ENCODE measurements at regions of chr17 and their contacts with region 1.

Region 1: DNA sequence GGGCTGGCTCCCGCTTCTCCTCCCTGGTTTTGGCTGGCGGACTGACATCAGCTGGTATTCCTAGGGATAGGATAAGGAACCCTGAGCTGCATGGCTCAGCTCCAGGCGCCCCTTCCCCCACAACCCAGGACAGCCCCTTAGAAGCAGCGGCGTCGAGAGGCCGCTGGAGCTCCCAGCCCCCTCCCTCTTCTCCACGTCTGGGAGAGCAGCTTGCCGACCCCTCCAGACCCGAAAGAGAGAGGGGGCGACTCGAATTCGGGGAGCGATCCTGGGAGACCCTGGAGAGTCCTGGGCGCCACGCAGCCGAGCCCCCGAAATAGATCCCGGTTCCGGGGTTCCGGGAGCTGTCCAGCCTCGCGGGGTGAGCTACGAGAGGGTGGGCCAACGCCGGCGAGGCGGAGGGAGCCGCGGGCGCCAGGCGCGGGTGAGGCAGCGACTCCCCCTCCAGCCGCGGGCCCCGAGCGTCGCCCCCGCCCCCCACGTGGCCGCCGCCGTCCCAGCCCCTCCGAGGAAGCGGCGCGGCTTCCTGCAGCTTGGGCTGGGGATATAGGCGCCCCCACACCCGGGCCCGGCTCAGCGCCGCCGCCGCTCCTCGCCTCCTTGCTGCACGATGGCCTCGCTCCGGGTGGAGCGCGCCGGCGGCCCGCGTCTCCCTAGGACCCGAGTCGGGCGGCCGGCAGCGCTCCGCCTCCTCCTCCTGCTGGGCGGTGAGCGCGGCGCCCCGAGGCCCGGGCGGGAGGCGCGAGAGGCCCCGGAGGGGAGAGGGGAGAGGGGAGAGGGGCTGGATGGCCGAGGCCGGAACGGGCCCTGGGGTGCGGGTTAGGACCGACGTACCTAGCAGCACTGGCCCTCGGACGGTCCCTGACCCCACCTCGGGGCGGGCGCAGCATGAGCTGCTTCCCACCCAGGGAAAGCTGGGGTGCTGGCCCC is at the start of gene RAMP2:
- DNase-seq: no peak
- ATAC-seq: peak; percentile 58
- H3K4me3 ChIP-seq: peak within 1 kb of the TSS; percentile 53 to 75 (median 59)
- H3K27ac ChIP-seq: no peak within 1 kb of the TSS
- H3K4me1 ChIP-seq: peaks cover 53% of the 10 kb centered on the region
- H3K27me3 ChIP-seq: peaks cover 0 to 12% of the 10 kb centered on the region in 2 experiments; a peak in 2 of 5 replicates
- CTCF ChIP-seq: peak; percentile 1; the same call in 1 of the 2 replicates
- EP300 ChIP-seq: no peak
- POLR2A ChIP-seq: no peak
- RAD21 ChIP-seq: no peak
- total RNA-seq, gene RAMP2: 0.74 and 1.4 TPM in 2 replicates

Region 2: DNA sequence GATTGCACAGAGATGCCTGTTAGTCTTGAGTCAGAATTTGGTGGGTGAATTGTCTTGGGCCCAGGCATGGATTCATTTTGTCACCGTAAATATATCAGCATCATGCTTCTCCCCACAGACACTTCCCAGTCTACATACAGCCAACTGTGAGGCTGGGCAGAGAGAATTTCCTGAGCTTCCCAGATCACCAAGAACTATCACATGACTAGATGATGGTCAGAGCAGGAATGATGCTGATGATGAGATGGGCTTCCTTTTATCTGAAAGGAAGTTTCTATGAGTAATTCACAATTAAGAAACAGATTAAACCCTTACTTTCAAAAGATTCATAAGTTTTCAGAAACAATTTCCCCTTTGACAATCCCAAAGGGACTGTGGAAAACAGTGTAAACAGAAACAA is 1506.1 kb before region 1 on chr17:
- CTCF ChIA-PET with region 1: no interaction called
- POLR2A ChIA-PET with region 1: no interaction called
- in situ Hi-C with region 1: no loop called
- intact Hi-C with region 1: no loop called
- DNase-seq: no peak
- ATAC-seq: no peak
- H3K4me3 ChIP-seq: no peak overlapping the region
- H3K27ac ChIP-seq: no peak overlapping the region
- H3K4me1 ChIP-seq: no peaks in the 10 kb centered on the region
- H3K27me3 ChIP-seq: peaks cover 0 to 8% of the 10 kb centered on the region in 2 experiments; a peak in 2 of 5 replicates
- CTCF ChIP-seq: no peak
- EP300 ChIP-seq: no peak
- POLR2A ChIP-seq: no peak
- RAD21 ChIP-seq: no peak

Region 3: DNA sequence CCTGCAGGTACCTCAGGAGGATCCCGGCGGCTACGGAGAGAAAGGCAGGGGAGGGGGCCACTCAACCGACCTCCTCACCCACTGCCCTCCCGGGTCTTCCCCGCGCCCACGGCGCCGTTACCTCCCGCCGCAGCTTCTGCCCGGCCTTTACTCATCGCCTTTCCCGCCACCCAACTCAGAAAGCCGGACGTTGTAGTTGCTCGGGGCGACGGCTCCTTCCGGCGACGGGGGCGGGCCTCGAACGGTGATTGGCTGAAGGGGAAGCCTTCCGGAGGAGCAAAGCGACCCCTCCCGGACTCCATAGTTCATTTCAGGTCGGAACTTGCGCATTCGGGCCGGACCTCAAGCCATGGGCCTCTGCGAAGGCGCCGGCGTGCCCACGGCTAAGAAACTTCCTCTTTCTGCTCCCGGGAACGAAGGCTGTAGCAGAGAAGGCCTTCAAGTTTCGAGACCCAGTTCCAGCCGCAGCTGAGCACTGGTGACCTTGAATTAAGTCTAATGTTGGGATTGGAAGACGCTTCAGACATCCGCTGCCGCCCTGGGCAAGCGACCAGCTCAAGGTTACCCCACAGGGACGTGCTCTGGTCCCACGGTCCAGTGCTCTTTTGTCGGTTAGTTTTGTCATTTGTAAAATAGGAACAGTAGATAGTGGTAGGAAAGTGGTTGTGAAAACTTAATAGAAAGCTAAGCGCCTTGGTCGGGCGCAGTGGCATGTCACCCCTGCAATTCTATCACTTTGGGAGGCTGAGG is 183.2 kb before region 1 on chr17 and contains the start of gene PSMC3IP:
- CTCF ChIA-PET with region 1: interaction called, 4 read pairs
- POLR2A ChIA-PET with region 1: interaction called, 7 read pairs
- in situ Hi-C with region 1: no loop called
- intact Hi-C with region 1: loop called (anchors 5 kb)
- DNase-seq: peak; percentile 92
- ATAC-seq: peak; percentile 90
- H3K4me3 ChIP-seq: peak within 1 kb of the TSS; percentile 75 to 97 (median 87)
- H3K27ac ChIP-seq: peak within 1 kb of the TSS; percentile 90
- H3K4me1 ChIP-seq: peaks cover 33% of the 10 kb centered on the region
- H3K27me3 ChIP-seq: no peaks in the 10 kb centered on the region; a peak in 1 of 5 replicates
- CTCF ChIP-seq: peak; percentile 84
- EP300 ChIP-seq: 0 out of 4 replicates have a peak, but pooled peaks of 1 of the 2 experiments have one; percentile 24
- POLR2A ChIP-seq: peak; percentile 90 to 94
- RAD21 ChIP-seq: peak; percentile 59; the same call in 1 of the 2 replicates
- total RNA-seq, gene PSMC3IP: 20.1 and 22.4 TPM in 2 replicates

Region 4: GRCh38 chr17:42720996-42721583 is 39.8 kb before region 1 on chr17:
- CTCF ChIA-PET with region 1: interaction called, 47 read pairs
- POLR2A ChIA-PET with region 1: interaction called, 3 read pairs
- in situ Hi-C with region 1: loop called (anchors 5 kb)
- intact Hi-C with region 1: no loop called
- DNase-seq: peak; percentile 83
- ATAC-seq: peak; percentile 90
- H3K4me3 ChIP-seq: no peak overlapping the region
- H3K27ac ChIP-seq: no peak overlapping the region
- H3K4me1 ChIP-seq: no peaks in the 10 kb centered on the region
- H3K27me3 ChIP-seq: no peaks in the 10 kb centered on the region
- CTCF ChIP-seq: peak; percentile 86
- EP300 ChIP-seq: no peak
- POLR2A ChIP-seq: no peak
- RAD21 ChIP-seq: peak; percentile 93

Region 5: GRCh38 chr17:42744806-42745617 is 15.9 kb before region 1 on chr17 and contains the start of gene EZH1:
- CTCF ChIA-PET with region 1: no interaction called
- POLR2A ChIA-PET with region 1: interaction called, 55 read pairs
- in situ Hi-C with region 1: no loop called
- intact Hi-C with region 1: no loop called
- DNase-seq: peak; percentile 91
- ATAC-seq: peak; percentile 89
- H3K4me3 ChIP-seq: peak within 1 kb of the TSS; percentile 58 to 84 (median 76)
- H3K27ac ChIP-seq: peak within 1 kb of the TSS; percentile 83
- H3K4me1 ChIP-seq: peaks cover 62% of the 10 kb centered on the region
- H3K27me3 ChIP-seq: no peaks in the 10 kb centered on the region
- CTCF ChIP-seq: no peak; the same call in 1 of the 2 replicates
- EP300 ChIP-seq: peak; percentile 3 to 45; a peak in 1 of 4 replicates
- POLR2A ChIP-seq: peak; percentile 62 to 64; a peak in 3 of 4 replicates
- RAD21 ChIP-seq: no peak
- total RNA-seq, gene EZH1: 6.0 and 11.6 TPM in 2 replicates

Region 6: DNA sequence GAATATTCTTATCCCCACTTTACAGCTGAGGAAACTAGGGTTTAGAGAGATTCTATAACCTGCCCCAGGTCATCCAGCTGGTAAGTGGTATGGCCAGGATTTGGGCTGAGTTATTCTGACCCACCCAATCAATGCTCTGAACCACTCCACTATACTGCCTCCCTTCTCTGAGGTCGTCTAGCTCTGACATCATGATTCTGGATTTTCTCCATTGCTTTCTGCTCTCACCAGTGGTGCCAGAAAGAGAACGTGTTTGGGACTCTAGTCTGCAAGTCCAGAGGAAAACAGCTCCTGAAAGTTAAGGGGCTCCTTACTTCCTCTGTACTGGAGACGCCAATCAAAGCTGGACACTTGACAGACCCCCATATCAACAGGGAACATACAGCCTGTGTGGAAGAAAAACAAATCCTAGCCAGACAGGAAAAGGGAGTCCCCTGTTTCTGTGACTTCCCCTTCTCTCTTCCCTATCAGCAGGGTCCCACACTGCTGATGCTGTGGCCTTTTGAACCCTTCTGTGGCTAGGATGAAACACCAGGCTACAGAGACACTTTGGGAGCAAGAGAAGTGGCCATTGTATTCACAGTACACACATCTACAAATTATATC is 10.1 kb before region 1 on chr17:
- CTCF ChIA-PET with region 1: no interaction called
- POLR2A ChIA-PET with region 1: interaction called, 45 read pairs
- in situ Hi-C with region 1: no loop called
- intact Hi-C with region 1: no loop called
- DNase-seq: no peak
- ATAC-seq: 0 out of 3 replicates have a peak, but pooled peaks have one; percentile 11
- H3K4me3 ChIP-seq: no peak overlapping the region
- H3K27ac ChIP-seq: no peak overlapping the region
- H3K4me1 ChIP-seq: peaks cover 40% of the 10 kb centered on the region
- H3K27me3 ChIP-seq: no peaks in the 10 kb centered on the region
- CTCF ChIP-seq: no peak
- EP300 ChIP-seq: no peak
- POLR2A ChIP-seq: no peak
- RAD21 ChIP-seq: no peak

Region 7: GRCh38 chr17:42773290-42774035 is 12.5 kb after region 1 on chr17 and contains the start of gene VPS25:
- CTCF ChIA-PET with region 1: no interaction called
- POLR2A ChIA-PET with region 1: interaction called, 53 read pairs
- in situ Hi-C with region 1: no loop called
- intact Hi-C with region 1: no loop called
- DNase-seq: peak; percentile 84
- ATAC-seq: peak; percentile 95
- H3K4me3 ChIP-seq: peak within 1 kb of the TSS; percentile 74 to 96 (median 88)
- H3K27ac ChIP-seq: peak within 1 kb of the TSS; percentile 66
- H3K4me1 ChIP-seq: peaks cover 53% of the 10 kb centered on the region
- H3K27me3 ChIP-seq: no peaks in the 10 kb centered on the region; a peak in 1 of 5 replicates
- CTCF ChIP-seq: peak; percentile 61
- EP300 ChIP-seq: peak; percentile 44 to 53; a peak in 2 of 4 replicates
- POLR2A ChIP-seq: peak; percentile 95 to 96
- RAD21 ChIP-seq: peak; percentile 74
- total RNA-seq, gene VPS25: 148 and 161 TPM in 2 replicates

Region 8: DNA sequence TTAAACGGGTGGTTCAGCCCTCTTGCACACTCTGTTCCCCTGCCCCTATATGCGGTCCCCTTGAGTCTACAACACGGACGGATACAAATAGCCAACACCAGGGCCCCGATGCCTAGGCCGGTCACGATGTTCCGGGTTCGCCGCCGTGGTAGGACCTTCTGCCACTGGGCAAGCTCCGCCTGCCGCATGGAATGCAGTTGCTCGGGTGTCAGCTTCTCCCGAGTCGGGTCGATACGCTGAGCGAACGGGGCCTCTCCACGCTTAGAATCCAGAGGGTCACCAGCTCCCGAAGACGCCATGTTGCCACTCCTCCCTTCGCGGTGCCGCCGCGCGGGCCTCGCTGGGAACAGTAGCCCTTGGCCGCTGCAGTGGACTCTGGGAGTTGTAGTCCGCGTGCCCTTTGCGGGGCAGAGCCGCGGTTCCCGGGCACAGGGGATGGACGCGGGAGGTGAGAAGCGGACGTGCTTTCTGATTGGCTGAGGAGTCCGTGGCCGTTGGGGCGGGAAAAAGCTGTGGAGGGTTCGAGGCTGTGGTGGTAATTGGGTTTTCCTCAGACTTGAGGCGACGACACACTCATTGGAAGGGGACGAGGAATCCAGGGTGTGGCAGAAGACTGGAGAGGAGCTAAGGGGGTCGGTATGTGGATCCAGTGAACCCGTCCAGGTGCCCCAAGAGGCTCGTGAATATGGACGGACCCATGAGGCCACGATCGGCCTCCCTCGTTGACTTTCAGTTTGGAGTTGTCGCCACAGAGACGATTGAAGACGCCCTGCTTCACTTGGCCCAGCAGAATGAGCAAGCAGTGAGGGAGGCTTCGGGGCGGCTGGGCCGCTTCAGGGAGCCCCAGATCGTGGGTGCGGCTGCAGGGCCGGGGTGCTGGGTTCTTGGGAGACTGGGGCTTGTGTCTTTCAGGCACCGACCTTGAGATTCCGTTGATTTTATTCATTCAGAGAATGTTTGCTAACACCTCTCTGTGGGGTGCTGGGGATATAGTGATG is 37.8 kb after region 1 on chr17 and contains the starts of genes CNTD1 and COA3:
- CTCF ChIA-PET with region 1: no interaction called
- POLR2A ChIA-PET with region 1: interaction called, 10 read pairs
- in situ Hi-C with region 1: no loop called
- intact Hi-C with region 1: no loop called
- DNase-seq: peak; percentile 88
- ATAC-seq: peak; percentile 89
- H3K4me3 ChIP-seq: peak within 1 kb of the TSS; percentile 88 to 94 (median 94)
- H3K27ac ChIP-seq: peak within 1 kb of the TSS; percentile 88
- H3K4me1 ChIP-seq: peaks cover 58% of the 10 kb centered on the region
- H3K27me3 ChIP-seq: no peaks in the 10 kb centered on the region; a peak in 2 of 5 replicates
- CTCF ChIP-seq: peak; percentile 42
- EP300 ChIP-seq: peak in 1 of 2 experiments; percentile 34; a peak in 1 of 4 replicates
- POLR2A ChIP-seq: peak; percentile 77 to 92
- RAD21 ChIP-seq: peak; percentile 67
- total RNA-seq, gene CNTD1: 0.11 TPM in 1 of 2 replicates, not detected in the other
- total RNA-seq, gene COA3: 202 and 250 TPM in 2 replicates

Region 9: GRCh38 chr17:42928714-42929496 is 168.0 kb after region 1 on chr17:
- CTCF ChIA-PET with region 1: no interaction called
- POLR2A ChIA-PET with region 1: no interaction called
- in situ Hi-C with region 1: no loop called
- intact Hi-C with region 1: no loop called
- DNase-seq: peak; percentile 92
- ATAC-seq: peak; percentile 96
- H3K4me3 ChIP-seq: peak overlapping the region; percentile 18 to 55 (median 38); a peak in 4 of 6 replicates
- H3K27ac ChIP-seq: peak overlapping the region; percentile 83
- H3K4me1 ChIP-seq: peaks cover 38% of the 10 kb centered on the region
- H3K27me3 ChIP-seq: no peaks in the 10 kb centered on the region; a peak in 1 of 5 replicates
- CTCF ChIP-seq: peak; percentile 90
- EP300 ChIP-seq: peak in 1 of 2 experiments; percentile 35; a peak in 1 of 4 replicates
- POLR2A ChIP-seq: no peak
- RAD21 ChIP-seq: peak; percentile 94